ENCODE measurements at regions of chr4 and their contacts with region 1.

Region 1: DNA sequence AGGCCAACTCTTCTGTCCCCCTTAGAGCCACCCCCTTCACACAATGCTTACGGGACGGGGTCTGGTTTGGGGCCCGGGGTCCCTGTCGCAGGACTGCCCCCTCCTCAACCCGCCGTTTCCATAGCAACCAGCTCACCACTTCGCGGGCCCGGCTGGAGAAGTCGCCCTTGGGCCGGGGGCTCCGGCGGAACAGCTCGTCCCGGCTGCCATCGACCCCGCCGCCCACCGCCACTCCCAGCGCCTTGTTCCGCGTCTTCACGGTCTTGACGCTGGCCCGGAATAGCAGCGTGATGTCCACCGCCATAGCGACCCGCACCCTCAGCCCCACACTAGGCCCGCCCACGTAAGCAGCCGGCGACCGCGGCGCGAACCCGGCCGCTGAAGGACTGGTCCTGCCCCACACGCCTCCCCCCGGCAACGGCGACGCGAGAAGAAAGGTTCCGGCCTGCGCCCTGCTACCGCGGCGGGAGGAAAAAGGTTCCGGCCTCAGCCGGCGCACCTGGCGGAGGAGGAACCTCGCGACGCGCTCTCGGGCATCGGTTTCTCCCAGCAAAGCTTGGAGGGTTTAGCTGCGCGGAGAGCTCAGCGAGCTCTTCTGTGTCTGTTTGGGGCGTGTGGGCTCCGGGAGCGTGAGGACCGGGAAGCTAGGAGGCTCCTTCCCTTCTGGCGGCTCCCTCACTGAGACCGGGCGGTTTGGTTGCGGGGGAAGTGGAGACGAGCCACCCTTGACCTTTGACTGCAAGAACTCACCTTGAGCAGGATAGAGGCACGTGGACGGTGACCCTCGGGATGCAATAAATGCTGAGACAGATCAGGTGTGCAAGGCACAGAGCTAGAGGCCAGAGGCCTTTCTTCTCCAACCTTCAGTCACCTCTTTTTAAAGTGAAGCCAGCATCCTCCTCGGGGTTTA is at the start of gene STX18:
- DNase-seq: peak; percentile 92
- ATAC-seq: peak; percentile 89
- H3K4me3 Mint-ChIP-seq: peak within 1 kb of the TSS; percentile 89
- H3K27ac Mint-ChIP-seq: peak within 1 kb of the TSS; percentile 90
- H3K4me1 Mint-ChIP-seq: peaks cover 45% of the 10 kb centered on the region
- H3K27me3 Mint-ChIP-seq: no peaks in the 10 kb centered on the region
- total RNA-seq, gene STX18: 25.3 to 33.5 TPM

Region 2: GRCh38 chr4:4289941-4290850 is 251.7 kb before region 1 on chr4 and contains the starts of genes LYAR and ZBTB49:
- CTCF ChIA-PET with region 1: no interaction called
- POLR2A ChIA-PET with region 1: no interaction called
- intact Hi-C with region 1: loop called in 1 of 2 experiments (anchors 1 kb)
- DNase-seq: peak; percentile 98
- ATAC-seq: peak; percentile 95
- H3K4me3 Mint-ChIP-seq: peak within 1 kb of the TSS; percentile 93
- H3K27ac Mint-ChIP-seq: peak within 1 kb of the TSS; percentile 77
- H3K4me1 Mint-ChIP-seq: peaks cover 35% of the 10 kb centered on the region
- H3K27me3 Mint-ChIP-seq: no peaks in the 10 kb centered on the region
- total RNA-seq, gene LYAR: 65.6 to 74.3 TPM
- total RNA-seq, gene ZBTB49: 3.3 to 3.8 TPM

Region 3: GRCh38 chr4:4386736-4387392 is 155.1 kb before region 1 on chr4 and contains the start of gene NSG1:
- CTCF ChIA-PET with region 1: no interaction called
- POLR2A ChIA-PET with region 1: no interaction called
- intact Hi-C with region 1: no loop called
- DNase-seq: peak; percentile 67
- ATAC-seq: peak; percentile 63
- H3K4me3 Mint-ChIP-seq: peak within 1 kb of the TSS; percentile 73
- H3K27ac Mint-ChIP-seq: no peak within 1 kb of the TSS
- H3K4me1 Mint-ChIP-seq: peaks cover 8% of the 10 kb centered on the region
- H3K27me3 Mint-ChIP-seq: peaks cover 22% of the 10 kb centered on the region
- total RNA-seq, gene NSG1: 4.1 to 5.3 TPM

Region 4: DNA sequence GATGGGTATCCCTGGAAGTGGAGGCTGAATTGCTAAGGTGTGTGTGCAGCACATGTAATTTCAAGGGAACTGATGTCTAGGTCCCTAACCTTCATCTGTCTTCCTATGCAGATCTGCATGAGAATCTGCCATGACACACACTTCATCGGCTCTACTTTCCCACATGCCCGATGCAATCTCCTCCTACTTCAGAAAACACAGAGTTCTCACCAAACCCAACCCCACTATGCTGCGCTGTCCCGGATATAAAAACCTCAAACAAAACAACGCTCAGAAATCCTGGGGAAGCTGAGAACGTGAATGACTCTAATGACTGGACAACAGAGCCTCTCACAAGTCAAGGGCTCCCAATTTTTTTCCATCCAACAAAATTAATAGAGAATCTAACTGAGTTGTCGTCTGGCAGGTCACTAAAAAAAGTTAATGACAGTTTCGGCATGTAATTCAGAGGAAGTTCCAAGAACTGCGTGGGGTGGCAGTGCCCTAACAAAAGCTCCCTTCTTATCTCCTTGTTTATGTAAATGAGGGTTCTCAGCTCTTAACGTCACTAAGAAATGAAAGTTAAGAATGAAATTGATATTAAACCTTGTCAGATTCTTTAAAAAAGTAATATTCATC is 39.1 kb before region 1 on chr4:
- CTCF ChIA-PET with region 1: interaction called, 3 read pairs
- POLR2A ChIA-PET with region 1: interaction called, 4 read pairs
- intact Hi-C with region 1: loop called in 1 of 2 experiments (anchors 2 kb)
- DNase-seq: peak; percentile 55
- ATAC-seq: peak; percentile 96
- H3K4me3 Mint-ChIP-seq: peak overlapping the region; percentile 66
- H3K27ac Mint-ChIP-seq: peak overlapping the region; percentile 82
- H3K4me1 Mint-ChIP-seq: peaks cover 17% of the 10 kb centered on the region
- H3K27me3 Mint-ChIP-seq: no peaks in the 10 kb centered on the region

Region 5: DNA sequence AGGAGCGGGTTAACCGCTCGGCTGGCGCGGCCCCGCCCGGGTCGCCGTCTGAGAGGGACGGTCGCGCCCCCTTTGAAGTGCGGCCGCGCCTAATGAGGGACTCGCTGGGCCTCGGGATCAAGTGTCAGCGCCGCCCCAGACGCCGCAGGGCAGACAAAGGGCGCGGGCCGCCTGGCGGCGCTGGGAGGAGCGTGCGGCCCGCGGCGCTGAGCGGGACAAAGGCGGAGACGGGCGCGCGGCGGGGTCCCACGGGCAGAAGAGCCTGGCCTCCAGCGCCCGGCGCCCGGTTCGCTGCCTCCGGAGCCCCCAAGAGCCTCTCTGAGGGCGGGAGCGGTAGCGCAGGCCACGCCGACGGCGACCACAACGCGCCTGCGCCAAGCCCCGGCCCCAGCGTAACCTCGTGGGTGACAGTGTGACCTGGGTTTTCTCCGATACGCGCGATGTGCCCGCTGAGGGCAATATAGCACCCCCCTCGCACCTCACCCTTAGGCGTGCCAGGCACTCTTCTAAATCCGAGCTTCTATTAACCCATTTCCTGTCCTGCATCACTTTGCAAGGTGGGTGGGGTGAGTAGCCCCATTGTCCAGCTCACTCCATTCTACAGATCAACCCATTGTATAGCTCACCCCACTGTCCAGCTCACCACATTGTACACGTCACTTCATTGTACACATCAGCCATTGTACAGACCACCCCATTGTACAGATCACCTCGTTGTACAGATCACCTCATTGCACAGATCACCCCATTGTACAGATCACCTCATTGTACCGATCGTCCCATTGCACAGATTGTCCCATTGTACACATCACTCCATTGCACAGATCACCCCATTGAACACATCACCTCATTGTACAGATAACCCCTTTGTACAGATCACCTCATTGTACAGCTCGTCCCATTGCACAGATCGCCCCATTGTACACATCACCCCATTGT is 33.6 kb after region 1 on chr4:
- CTCF ChIA-PET with region 1: interaction called, 4 read pairs
- POLR2A ChIA-PET with region 1: no interaction called
- intact Hi-C with region 1: loop called in 1 of 2 experiments (anchors 1 kb)
- DNase-seq: peak; percentile 78
- ATAC-seq: peak; percentile 86
- H3K4me3 Mint-ChIP-seq: peak overlapping the region; percentile 60
- H3K27ac Mint-ChIP-seq: no peak overlapping the region
- H3K4me1 Mint-ChIP-seq: peaks cover 13% of the 10 kb centered on the region
- H3K27me3 Mint-ChIP-seq: no peaks in the 10 kb centered on the region